ENCODE measurements at regions of chr4 and their contacts with region 1.

Region 1: GRCh38 chr4:32658019-32658418 is 1937.8 kb downstream of the PCDH7 start:
- DNase-seq: no peak
- ATAC-seq: no peak
- H3K4me3 ChIP-seq: no peak overlapping the region
- H3K27ac ChIP-seq: no peak overlapping the region
- H3K4me1 ChIP-seq: no peaks in the 10 kb centered on the region
- H3K27me3 ChIP-seq: no peaks in the 10 kb centered on the region
- CTCF ChIP-seq: no peak
- POLR2A ChIP-seq: no peak
- RAD21 ChIP-seq: no peak

Region 2: DNA sequence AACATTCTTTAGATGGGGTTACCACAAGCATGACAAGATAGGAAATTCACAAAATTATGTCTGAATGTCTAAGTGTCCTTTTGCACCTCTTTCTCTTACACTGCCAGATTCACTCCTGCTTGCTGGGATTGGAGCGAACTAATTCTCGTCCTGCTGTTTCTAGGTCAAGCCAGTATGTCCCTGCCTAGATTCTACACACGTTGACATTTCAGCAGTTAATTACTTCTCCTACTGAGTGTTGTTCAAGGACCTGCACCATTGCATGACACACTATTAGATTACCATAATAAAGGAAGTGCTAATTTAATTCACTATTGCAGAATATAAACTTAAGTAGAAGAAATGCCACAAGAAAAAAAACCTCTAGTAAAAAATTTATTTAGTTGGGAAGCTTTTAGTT is 26.2 kb before region 1 on chr4:
- CTCF ChIA-PET with region 1: interaction called, 10 read pairs
- POLR2A ChIA-PET with region 1: no interaction called
- dilution Hi-C with region 1: no loop called
- in situ Hi-C with region 1: no loop called
- intact Hi-C with region 1: no loop called
- DNase-seq: no peak
- ATAC-seq: no peak
- H3K4me3 ChIP-seq: no peak overlapping the region
- H3K27ac ChIP-seq: no peak overlapping the region
- H3K4me1 ChIP-seq: no peaks in the 10 kb centered on the region
- H3K27me3 ChIP-seq: no peaks in the 10 kb centered on the region
- CTCF ChIP-seq: no peak
- POLR2A ChIP-seq: no peak
- RAD21 ChIP-seq: no peak

Measured in IMR-90 (cell line).